Calu3 (cell line): ENCODE measurements at regions of chr1 and their contacts with region 1.

Region 1: DNA sequence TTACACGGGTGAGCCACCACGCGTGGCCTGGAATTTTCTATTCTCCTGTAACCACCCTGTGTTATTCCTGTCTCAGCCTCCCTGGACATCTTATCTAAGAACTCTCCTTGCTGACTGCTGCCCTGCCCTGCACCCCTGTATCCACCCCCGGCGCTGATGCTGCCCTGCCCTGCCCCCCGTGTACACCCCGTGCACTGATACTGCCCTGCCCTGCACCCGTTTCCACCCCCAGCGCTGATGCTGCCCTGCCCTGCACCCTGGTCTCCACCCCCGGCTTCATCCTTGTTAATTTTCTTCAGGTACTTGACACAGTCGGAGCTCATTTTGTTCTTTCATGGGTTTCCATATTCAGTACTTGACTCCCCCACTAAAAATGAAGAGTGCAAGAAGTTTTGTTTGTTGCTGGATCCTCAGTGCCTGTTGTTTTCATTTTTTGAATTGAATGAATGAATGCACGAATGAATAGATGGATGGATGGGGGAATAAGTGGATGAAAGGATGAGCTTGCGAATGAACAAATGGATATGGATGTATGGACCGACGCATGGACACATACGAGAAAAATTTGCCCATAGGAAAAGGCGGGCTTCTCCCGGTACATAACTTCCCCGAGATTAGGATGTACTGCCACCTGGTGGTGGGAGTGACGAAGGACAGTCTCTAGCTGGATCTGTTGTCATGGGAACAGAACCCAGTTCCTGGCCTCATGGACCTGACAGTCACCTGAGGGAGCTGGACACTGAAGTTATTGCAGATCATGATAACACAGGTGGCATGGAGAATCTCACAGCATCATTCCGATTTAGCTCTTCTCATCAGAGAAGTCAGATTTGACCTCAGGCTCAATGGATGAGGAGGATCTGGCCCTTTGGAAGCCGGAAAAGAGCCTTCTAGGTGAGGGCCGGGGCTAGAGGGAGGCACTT is 14.9 kb downstream of the AADACL4 start:
- DNase-seq: peak; percentile 80
- H3K4me3 Mint-ChIP-seq: no peak overlapping the region
- H3K27ac Mint-ChIP-seq: no peak overlapping the region
- H3K4me1 Mint-ChIP-seq: peaks cover 7% of the 10 kb centered on the region
- H3K27me3 Mint-ChIP-seq: peaks cover 9% of the 10 kb centered on the region
- CTCF ChIP-seq: peak; percentile 84

Region 2: DNA sequence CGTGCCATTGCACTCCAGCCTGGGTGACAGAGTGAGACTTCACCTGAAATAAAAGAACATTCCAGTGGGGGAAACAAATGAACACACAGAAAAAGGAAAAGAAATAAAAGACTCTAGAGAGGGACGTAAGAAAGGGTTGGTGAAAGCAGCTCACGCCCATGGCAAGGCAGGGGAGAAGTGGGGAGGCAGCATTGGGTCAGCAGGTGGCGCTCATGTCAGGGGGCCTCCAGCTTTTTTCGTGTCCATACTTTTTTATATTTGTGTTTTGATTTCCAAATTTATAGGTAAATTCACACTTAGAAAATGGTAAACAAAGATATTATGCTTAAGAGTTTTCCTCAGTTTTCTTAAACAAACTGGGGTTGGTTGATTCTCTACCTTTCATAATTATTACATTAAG is 383.4 kb before region 1 on chr1:
- CTCF ChIA-PET with region 1: interaction called, 5 read pairs
- intact Hi-C with region 1: loop called (anchors 2 kb)
- DNase-seq: peak; percentile 36
- H3K4me3 Mint-ChIP-seq: no peak overlapping the region
- H3K27ac Mint-ChIP-seq: no peak overlapping the region
- H3K4me1 Mint-ChIP-seq: no peaks in the 10 kb centered on the region
- H3K27me3 Mint-ChIP-seq: no peaks in the 10 kb centered on the region
- CTCF ChIP-seq: peak; percentile 16